ENCODE measurements at regions of chr22 and their contacts with region 1.

Region 1: GRCh38 chr22:31489604-31490495 is at the start of gene EIF4ENIF1:
- DNase-seq: peak; percentile 81 to 91 (median 87)
- ATAC-seq: peak; percentile 89
- H3K4me3 ChIP-seq: peak within 1 kb of the TSS; percentile 66
- H3K4me3 Mint-ChIP-seq: peak within 1 kb of the TSS; percentile 87 to 98 (median 94)
- H3K27ac ChIP-seq: peak within 1 kb of the TSS; percentile 92
- H3K27ac Mint-ChIP-seq: peak within 1 kb of the TSS; percentile 93 to 99 (median 96)
- H3K4me1 ChIP-seq: peaks cover 19 to 25% of the 10 kb centered on the region in 2 donors
- H3K4me1 Mint-ChIP-seq: peaks cover 7 to 54% (median 47%) of the 10 kb centered on the region in 7 donors
- H3K27me3 ChIP-seq: no peaks in the 10 kb centered on the region
- H3K27me3 Mint-ChIP-seq: no peaks in the 10 kb centered on the region
- total RNA-seq, gene EIF4ENIF1: 26.3 to 46.5 (median 36.8) TPM

Region 2: GRCh38 chr22:31150615-31151014 is 339.2 kb before region 1 on chr22:
- CTCF ChIA-PET with region 1: no interaction called
- POLR2A ChIA-PET with region 1: no interaction called
- intact Hi-C with region 1: no loop called
- DNase-seq: no peak
- ATAC-seq: no peak
- H3K4me3 ChIP-seq: no peak overlapping the region
- H3K4me3 Mint-ChIP-seq: no peak overlapping the region
- H3K27ac ChIP-seq: no peak overlapping the region
- H3K27ac Mint-ChIP-seq: no peak overlapping the region
- H3K4me1 ChIP-seq: no peaks in the 10 kb centered on the region
- H3K4me1 Mint-ChIP-seq: peaks cover 0 to 4% (median 0%) of the 10 kb centered on the region in 7 donors
- H3K27me3 ChIP-seq: no peaks in the 10 kb centered on the region
- H3K27me3 Mint-ChIP-seq: peaks cover 0 to 13% (median 4%) of the 10 kb centered on the region in 5 donors

Region 3: DNA sequence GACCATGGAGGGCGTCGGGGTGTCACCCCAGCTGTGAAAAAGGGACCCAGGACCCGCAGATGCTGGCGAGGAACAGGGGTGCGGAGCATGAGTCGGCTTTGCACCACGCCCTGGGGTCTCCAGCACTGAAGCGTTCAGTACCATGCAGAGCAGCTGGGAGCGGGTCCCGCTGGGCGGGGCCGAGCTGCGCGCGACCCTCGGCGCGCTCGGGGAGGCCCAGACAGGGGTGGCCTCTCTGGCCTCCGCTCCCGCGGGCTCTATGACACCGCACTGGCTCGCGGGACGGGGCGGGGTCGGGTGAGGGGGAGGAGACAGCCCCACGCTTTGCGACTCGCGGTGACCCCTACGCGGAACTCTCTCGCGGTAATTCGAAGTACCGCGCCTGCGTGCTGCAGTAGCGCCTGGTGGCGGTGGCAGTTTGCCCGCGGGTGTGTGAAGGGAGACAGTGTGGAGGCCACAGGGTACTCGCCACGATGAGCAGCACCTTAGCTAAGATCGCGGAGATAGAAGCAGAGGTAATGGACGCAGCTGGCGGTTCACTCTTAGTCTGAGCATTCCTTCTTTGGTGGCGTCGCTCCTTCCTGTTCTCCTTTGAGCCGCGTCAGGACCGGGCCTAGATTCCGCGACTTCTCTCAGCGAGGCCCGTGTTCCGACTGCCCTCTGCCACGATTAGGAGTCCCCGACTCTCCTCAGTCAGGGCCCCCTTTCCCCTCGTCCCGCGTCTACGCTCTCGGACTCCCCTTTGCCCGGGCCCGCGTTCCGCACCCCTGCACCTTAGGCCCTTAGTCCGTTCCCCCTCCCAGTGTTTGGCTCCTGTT is 90.4 kb before region 1 on chr22 and contains the start of gene DRG1:
- CTCF ChIA-PET with region 1: no interaction called
- POLR2A ChIA-PET with region 1: interaction called, 4 read pairs
- intact Hi-C with region 1: loop called (anchors 1 kb)
- DNase-seq: peak; percentile 90 to 98 (median 93)
- ATAC-seq: peak; percentile 99
- H3K4me3 ChIP-seq: peak within 1 kb of the TSS; percentile 88
- H3K4me3 Mint-ChIP-seq: peak within 1 kb of the TSS; percentile 92 to 99 (median 96)
- H3K27ac ChIP-seq: peak within 1 kb of the TSS; percentile 91
- H3K27ac Mint-ChIP-seq: peak within 1 kb of the TSS; percentile 85 to 97 (median 94)
- H3K4me1 ChIP-seq: peaks cover 10 to 15% of the 10 kb centered on the region in 2 donors
- H3K4me1 Mint-ChIP-seq: peaks cover 5 to 35% (median 22%) of the 10 kb centered on the region in 7 donors
- H3K27me3 ChIP-seq: no peaks in the 10 kb centered on the region
- H3K27me3 Mint-ChIP-seq: no peaks in the 10 kb centered on the region
- total RNA-seq, gene DRG1: 53.3 to 109 (median 84.4) TPM

Region 4: GRCh38 chr22:31556627-31557203 is 66.9 kb after region 1 on chr22:
- CTCF ChIA-PET with region 1: no interaction called
- POLR2A ChIA-PET with region 1: no interaction called
- intact Hi-C with region 1: loop called in 1 of 2 experiments (anchors 5 kb)
- DNase-seq: peak in 5 of 9 donors; percentile 25 to 40 (median 28)
- ATAC-seq: peak; percentile 49
- H3K4me3 ChIP-seq: no peak overlapping the region
- H3K4me3 Mint-ChIP-seq: no peak overlapping the region
- H3K27ac ChIP-seq: no peak overlapping the region
- H3K27ac Mint-ChIP-seq: peak overlapping the region in 1 of 9 donors; percentile 46
- H3K4me1 ChIP-seq: peaks cover 0 to 8% of the 10 kb centered on the region in 2 donors
- H3K4me1 Mint-ChIP-seq: peaks cover 3 to 21% (median 9%) of the 10 kb centered on the region in 7 donors
- H3K27me3 ChIP-seq: no peaks in the 10 kb centered on the region
- H3K27me3 Mint-ChIP-seq: no peaks in the 10 kb centered on the region

Region 5: DNA sequence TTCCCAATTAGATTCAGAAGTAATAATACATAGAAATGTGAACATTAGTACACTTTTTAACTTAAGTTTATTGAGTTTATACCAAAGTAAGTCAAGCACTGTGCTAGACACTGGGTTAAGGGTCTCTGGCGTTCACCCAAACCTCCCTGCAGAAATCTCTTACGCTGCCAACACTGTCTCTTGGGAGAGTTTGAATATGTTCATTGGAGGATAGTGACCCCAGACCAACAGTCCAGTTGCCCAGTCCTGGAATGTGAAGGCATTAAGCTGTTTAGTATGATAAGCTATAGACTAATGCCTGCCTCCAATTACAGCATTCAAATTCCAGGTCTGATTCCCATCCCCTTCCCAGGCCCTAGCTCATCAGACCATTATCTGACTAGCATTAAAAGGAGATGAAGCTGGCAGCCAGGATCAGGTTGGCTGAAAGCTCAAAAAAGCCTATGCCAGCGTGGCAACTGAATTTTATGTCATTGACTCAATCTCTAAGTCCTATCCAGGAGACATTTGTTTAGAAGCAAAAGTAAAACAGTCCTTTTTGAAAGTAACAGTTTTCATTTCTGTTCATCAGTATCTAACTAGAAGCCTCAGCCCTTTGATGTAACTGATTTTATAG is 84.3 kb after region 1 on chr22:
- CTCF ChIA-PET with region 1: no interaction called
- POLR2A ChIA-PET with region 1: no interaction called
- intact Hi-C with region 1: no loop called
- DNase-seq: no peak
- ATAC-seq: no peak
- H3K4me3 ChIP-seq: no peak overlapping the region
- H3K4me3 Mint-ChIP-seq: no peak overlapping the region
- H3K27ac ChIP-seq: no peak overlapping the region
- H3K27ac Mint-ChIP-seq: peak overlapping the region in 2 of 9 donors; percentile 33 to 76
- H3K4me1 ChIP-seq: no peaks in the 10 kb centered on the region
- H3K4me1 Mint-ChIP-seq: peaks cover 0 to 15% (median 4%) of the 10 kb centered on the region in 7 donors
- H3K27me3 ChIP-seq: no peaks in the 10 kb centered on the region
- H3K27me3 Mint-ChIP-seq: no peaks in the 10 kb centered on the region

Measured in naive thymus-derived CD4-positive, alpha-beta T cell (primary cell).